Heart left ventricle (tissue), 16 donors: ENCODE measurements at regions of chr1 and their contacts with region 1.

Region 1: DNA sequence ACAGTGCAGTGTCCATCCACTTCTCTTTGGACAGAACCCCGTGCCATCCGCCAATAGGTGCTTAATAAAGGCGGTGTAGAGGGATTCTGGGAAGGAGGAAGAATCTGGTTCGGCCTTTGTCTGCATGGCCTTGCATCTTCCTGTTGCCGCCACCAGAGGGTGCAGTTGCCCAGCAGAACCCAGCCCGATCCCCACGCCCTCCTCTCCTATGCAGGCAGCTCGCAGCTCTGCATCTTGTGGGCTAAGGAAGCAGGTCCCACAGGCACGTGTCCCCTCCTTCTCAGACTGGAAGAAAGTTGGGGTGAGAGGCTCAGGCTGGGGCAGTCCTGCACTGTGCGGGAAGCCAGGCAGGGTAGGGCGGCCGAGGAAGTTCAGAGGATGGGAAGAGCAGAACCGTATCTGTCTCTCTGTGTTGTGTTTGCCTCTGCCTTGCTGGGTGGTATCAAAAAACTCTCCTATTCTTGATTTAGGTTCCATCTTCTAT is 20.8 kb downstream of the NAV1 start:
- DNase-seq: peak; percentile 81 to 89 (median 85)
- ATAC-seq: peak; percentile 77 to 85 (median 78)
- H3K4me3 ChIP-seq: no peak overlapping the region
- H3K27ac ChIP-seq: peak overlapping the region in 4 of 12 donors; percentile 25 to 51 (median 39)
- H3K4me1 ChIP-seq: peaks cover 14 to 94% (median 73%) of the 10 kb centered on the region in 12 donors
- H3K27me3 ChIP-seq: no peaks in the 10 kb centered on the region
- CTCF ChIP-seq: peak; percentile 90 to 97 (median 94)
- POLR2A ChIP-seq: no peak

Region 2: DNA sequence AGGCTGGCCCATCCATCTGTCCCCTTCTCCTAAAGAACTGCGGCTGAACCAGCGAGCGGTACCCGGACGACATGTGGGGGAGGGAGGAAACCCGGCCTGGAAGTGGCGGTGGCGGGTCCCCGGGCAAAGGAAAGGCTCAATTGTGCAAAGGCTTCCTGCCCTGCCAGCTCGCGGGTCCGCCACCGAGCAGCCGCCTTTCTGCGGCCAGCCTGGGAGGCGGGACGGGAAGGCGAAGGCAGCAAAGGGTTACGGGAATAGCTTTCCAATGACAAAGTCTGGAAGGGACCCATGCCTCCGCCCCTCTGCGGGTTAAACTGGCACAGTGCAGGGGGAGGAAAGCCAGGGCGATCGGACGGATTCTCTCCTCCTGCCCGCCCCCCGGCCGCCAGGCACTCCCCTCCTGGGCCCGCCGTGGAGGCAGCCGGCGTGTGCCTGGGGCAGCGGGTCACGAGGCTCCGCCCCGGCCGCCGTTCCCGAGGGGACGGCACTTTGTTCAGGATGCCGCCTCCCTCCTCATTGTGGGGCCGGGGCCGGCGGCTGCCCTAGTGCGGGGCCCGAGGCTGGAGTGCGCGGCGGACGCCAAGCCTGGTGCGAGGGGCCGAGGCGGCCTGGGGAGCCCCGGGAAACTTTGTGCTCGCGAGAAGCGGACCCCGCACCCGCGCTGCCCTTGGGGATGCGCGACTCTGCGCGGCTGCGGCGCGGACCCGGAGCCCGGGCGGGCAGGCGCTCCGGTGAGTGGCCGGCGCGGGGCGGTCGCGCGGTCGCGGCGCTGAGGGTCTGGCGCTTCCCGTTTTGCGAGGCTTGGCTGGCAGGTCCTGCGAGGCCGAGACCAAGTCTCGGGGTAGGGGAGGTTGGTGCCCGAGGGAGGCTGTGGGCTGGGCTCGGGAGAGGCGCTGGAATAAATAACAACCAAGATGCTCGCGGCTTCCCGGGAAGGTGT is 20.8 kb before region 1 on chr1 and contains the start of gene NAV1:
- intact Hi-C with region 1: loop called in 2 of 10 experiments (anchors 2 kb)
- DNase-seq: peak; percentile 77 to 87 (median 79)
- ATAC-seq: peak; percentile 18 to 79 (median 70)
- H3K4me3 ChIP-seq: peak within 1 kb of the TSS; percentile 34 to 84 (median 72)
- H3K27ac ChIP-seq: peak within 1 kb of the TSS; percentile 55 to 92 (median 86)
- H3K4me1 ChIP-seq: peaks cover 0 to 89% (median 53%) of the 10 kb centered on the region in 12 donors
- H3K27me3 ChIP-seq: no peaks in the 10 kb centered on the region
- CTCF ChIP-seq: no peak
- POLR2A ChIP-seq: peak in 1 of 2 donors; percentile 72
- total RNA-seq, gene NAV1: 58.0 to 107 (median 85.0) TPM

Region 3: DNA sequence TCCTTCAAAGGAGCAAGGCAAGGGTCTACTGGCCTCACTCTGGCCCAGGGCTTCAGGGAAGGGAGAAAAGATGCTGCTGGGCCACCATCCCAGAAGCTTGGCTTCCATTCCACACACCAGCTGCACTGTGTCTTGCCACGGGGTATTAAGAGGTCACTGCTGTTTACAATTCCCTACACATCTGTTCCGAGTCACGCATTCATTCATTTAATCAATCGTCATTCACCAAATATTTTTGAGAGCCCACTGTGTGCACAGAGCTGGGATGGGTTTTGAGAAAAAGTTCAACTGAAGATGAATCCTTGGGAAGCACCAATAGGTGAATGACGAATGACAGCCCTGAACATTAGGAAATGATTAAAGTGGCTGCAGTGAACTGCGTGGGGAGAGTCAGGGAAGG is 80.9 kb after region 1 on chr1:
- intact Hi-C with region 1: loop called in 2 of 10 experiments (anchors 10 kb)
- DNase-seq: peak in 4 of 5 donors; percentile 65 to 75 (median 69)
- ATAC-seq: peak; percentile 47 to 76 (median 65)
- H3K4me3 ChIP-seq: no peak overlapping the region
- H3K27ac ChIP-seq: peak overlapping the region in 10 of 12 donors; percentile 12 to 67 (median 62)
- H3K4me1 ChIP-seq: peaks cover 0 to 65% (median 49%) of the 10 kb centered on the region in 12 donors
- H3K27me3 ChIP-seq: no peaks in the 10 kb centered on the region
- CTCF ChIP-seq: no peak
- POLR2A ChIP-seq: no peak

Region 4: DNA sequence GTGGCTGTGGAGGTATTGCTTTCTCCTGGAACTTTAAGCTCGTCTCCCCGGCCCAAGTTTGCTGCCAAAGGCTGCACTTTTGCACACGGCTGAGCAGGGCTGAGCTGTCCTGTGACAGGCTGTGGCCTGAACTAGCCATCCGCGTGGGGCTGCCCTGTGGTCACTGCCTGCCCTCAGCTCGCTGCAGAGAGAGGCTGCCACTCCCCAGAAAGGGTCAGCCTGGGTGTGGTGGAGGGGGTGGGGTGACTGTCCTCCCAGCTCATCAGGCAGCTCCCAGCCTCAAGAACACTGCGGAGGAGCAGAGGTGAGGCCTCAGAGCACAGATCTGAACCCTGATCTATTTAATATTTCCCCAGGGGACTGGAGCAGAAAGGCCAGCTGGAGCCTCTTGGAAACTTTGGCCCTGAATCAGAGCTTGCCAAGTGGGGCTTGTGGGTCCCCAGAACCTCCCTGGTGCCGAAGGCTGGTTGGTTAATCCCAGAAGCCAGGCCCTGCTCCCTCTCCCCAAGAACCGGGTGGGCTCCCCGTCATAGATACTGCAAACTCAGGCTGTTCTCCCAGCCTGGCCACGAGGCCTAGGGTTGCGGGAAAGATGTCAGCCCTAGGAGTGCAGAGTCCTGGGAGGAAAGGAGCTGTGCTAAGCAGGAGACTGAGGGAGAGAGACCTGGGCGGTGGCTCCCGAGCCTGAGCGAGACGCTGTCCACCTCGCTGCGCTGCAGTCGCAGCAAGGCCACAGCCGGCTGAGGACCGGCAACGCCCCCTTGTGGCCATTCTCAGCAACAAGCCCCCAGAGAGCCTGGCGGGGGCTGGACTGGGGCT is 144.1 kb after region 1 on chr1:
- intact Hi-C with region 1: loop called (anchors 1 to 2 kb)
- DNase-seq: peak; percentile 85 to 91 (median 88)
- ATAC-seq: peak; percentile 83 to 93 (median 84)
- H3K4me3 ChIP-seq: no peak overlapping the region
- H3K27ac ChIP-seq: peak overlapping the region in 11 of 12 donors; percentile 30 to 79 (median 60)
- H3K4me1 ChIP-seq: peaks cover 8 to 41% (median 24%) of the 10 kb centered on the region in 12 donors
- H3K27me3 ChIP-seq: no peaks in the 10 kb centered on the region
- CTCF ChIP-seq: peak; percentile 96 to 100 (median 98)
- POLR2A ChIP-seq: no peak